A673 (cell line): ENCODE measurements at regions of chr9 and their contacts with region 1.

Region 1: GRCh38 chr9:96217754-96218693 is 84.0 kb downstream of the HSD17B3 start:
- DNase-seq: peak; percentile 77
- H3K4me3 ChIP-seq: peak overlapping the region; percentile 23
- H3K27ac ChIP-seq: no peak overlapping the region
- H3K4me1 ChIP-seq: no peaks in the 10 kb centered on the region
- H3K27me3 ChIP-seq: peaks cover 4% of the 10 kb centered on the region
- CTCF ChIP-seq: peak; percentile 89

Region 2: GRCh38 chr9:94672811-94673487 is 1545.1 kb before region 1 on chr9:
- CTCF ChIA-PET with region 1: no interaction called
- POLR2A ChIA-PET with region 1: no interaction called
- intact Hi-C with region 1: loop called (anchors 5 kb)
- DNase-seq: no peak
- H3K4me3 ChIP-seq: no peak overlapping the region
- H3K27ac ChIP-seq: no peak overlapping the region
- H3K4me1 ChIP-seq: peaks cover 4% of the 10 kb centered on the region
- H3K27me3 ChIP-seq: no peaks in the 10 kb centered on the region
- CTCF ChIP-seq: no peak

Region 3: GRCh38 chr9:95167998-95168397 is 1050.0 kb before region 1 on chr9:
- CTCF ChIA-PET with region 1: no interaction called
- POLR2A ChIA-PET with region 1: interaction called, 20 read pairs
- intact Hi-C with region 1: no loop called
- DNase-seq: peak; percentile 89
- H3K4me3 ChIP-seq: no peak overlapping the region
- H3K27ac ChIP-seq: no peak overlapping the region
- H3K4me1 ChIP-seq: peaks cover 24% of the 10 kb centered on the region
- H3K27me3 ChIP-seq: no peaks in the 10 kb centered on the region
- CTCF ChIP-seq: peak; percentile 80

Region 4: GRCh38 chr9:95516734-95517558 is 701.1 kb before region 1 on chr9 and contains the start of gene PTCH1:
- CTCF ChIA-PET with region 1: no interaction called
- POLR2A ChIA-PET with region 1: no interaction called
- intact Hi-C with region 1: loop called (anchors 5 kb)
- DNase-seq: peak; percentile 78
- H3K4me3 ChIP-seq: peak within 1 kb of the TSS; percentile 63
- H3K27ac ChIP-seq: peak within 1 kb of the TSS; percentile 43
- H3K4me1 ChIP-seq: peaks cover 37% of the 10 kb centered on the region
- H3K27me3 ChIP-seq: no peaks in the 10 kb centered on the region
- CTCF ChIP-seq: no peak
- total RNA-seq, gene PTCH1: 32.6 and 36.5 TPM in 2 replicates

Region 5: DNA sequence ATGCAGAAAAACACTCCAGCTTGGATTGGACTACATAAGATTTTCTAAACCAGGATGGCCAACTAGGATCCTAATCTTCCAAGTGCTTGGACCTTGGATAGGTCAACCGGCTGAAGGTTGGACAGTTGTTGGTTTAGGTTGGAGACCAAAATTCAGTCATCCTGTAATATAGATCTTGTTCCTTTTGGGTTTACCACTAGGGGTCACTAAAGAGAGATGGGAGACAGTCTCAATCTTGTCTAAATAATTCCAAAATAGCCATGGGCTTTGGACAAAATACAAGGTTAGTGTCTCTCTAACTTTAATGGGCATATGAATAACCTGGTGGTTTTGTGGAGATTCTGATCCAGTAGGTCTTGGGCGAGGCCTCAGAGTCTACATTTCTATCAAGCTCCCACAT is 491.3 kb before region 1 on chr9:
- CTCF ChIA-PET with region 1: interaction called, 8 read pairs
- POLR2A ChIA-PET with region 1: no interaction called
- intact Hi-C with region 1: loop called (anchors 5 kb)
- DNase-seq: peak; percentile 68
- H3K4me3 ChIP-seq: no peak overlapping the region
- H3K27ac ChIP-seq: no peak overlapping the region
- H3K4me1 ChIP-seq: no peaks in the 10 kb centered on the region
- H3K27me3 ChIP-seq: no peaks in the 10 kb centered on the region
- CTCF ChIP-seq: peak; percentile 81

Region 6: DNA sequence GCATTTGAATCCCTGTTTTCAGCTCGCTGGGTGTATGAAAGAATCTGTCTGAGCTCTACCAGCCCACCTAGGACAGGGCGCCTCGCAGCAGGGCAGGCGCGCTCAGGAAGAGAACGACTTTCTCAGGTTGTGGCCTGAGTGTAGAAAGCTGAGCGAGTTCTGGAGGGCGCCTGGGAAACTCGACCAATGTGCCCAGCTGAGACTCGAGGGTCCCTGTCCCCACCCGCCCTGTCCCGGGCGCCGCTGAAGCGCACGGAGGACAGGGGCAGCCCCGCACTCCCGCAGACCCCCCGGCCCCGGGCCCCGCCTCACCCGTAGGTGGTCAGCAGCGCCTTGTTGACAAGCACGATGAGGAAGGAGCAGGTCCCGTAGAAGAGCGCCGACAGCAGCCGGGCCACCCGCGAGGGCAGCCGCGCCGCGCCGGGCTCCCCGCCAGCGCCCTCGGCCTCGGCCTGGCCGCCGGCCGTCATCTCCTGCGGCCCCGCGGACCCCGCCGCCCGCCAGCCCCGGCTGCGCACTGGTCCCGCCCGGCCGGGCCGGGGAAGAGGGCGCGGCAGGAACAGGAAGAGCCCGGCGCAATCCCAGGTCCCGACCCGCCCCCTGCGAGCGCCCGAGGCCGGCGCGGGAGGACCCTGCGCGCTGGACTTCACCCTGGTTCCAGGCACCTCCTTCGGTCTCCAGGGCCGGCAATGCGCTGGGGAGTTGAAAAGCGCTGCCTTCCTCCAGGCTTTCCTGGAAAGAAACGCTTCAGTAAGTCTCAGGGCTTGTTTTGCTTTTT is 165.3 kb after region 1 on chr9 and contains the start of gene SLC35D2:
- CTCF ChIA-PET with region 1: no interaction called
- POLR2A ChIA-PET with region 1: no interaction called
- intact Hi-C with region 1: no loop called
- DNase-seq: no peak
- H3K4me3 ChIP-seq: peak within 1 kb of the TSS; percentile 35
- H3K27ac ChIP-seq: no peak within 1 kb of the TSS
- H3K4me1 ChIP-seq: peaks cover 15% of the 10 kb centered on the region
- H3K27me3 ChIP-seq: no peaks in the 10 kb centered on the region
- CTCF ChIP-seq: no peak
- total RNA-seq, gene SLC35D2: 1.1 TPM in 2 replicates